Tibial artery (tissue), 4 donors: ENCODE measurements at regions of chr18 and their contacts with region 1.

Region 1: DNA sequence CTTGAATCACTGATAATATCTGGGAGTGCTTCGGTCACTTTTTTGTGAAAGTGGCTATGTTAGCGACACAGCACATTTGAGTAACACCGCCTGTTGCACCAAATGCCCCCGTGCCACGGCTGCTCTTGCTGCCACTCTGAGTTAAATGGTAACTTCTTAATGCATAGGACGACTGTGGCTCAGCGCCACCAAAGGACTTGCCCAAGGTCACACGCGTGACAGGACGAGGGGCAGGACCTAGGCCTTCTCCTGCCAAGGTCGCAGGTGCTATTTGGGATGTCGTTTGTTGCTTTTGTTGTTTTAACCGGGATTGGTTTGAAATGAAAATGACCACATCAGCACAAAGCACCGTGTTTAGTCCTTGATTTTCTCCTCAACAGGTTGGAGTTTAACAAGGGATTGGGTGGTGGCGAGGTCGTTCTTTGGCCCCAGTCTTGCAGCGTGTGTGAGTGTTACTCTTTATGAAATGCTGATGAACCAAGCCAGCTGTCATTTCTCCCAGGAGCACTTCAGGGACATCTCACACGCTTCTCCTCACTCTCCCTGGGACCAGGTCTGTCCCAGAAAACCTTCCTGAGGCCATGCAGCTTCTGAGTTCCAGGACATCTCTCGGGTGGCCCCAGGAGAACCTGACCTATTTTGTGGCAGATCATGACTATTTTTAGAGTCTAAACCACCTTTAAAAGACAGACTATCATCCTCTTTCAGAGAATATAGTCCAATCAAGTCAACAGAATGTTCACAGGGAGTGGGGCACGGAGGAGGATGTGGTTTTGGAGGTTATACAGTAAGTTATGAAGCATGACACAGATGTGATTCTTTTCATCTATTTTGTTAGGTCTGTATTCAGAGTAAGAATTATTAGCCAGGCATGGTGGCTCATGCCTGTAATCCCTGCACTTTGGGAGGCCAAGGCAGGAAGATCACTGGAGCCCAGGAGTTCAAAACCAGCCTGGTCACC is 49.9 kb downstream of the MTCL1 start:
- DNase-seq: no peak
- H3K4me3 ChIP-seq: no peak overlapping the region
- H3K27ac ChIP-seq: no peak overlapping the region
- H3K4me1 ChIP-seq: no peaks in the 10 kb centered on the region
- H3K27me3 ChIP-seq: no peaks in the 10 kb centered on the region
- CTCF ChIP-seq: no peak

Region 2: GRCh38 chr18:7094432-7094831 is 1660.8 kb before region 1 on chr18:
- intact Hi-C with region 1: loop called (anchors 5 kb)
- DNase-seq: no peak
- H3K4me3 ChIP-seq: no peak overlapping the region
- H3K27ac ChIP-seq: no peak overlapping the region
- H3K4me1 ChIP-seq: peaks cover 0 to 10% (median 0%) of the 10 kb centered on the region in 4 donors
- H3K27me3 ChIP-seq: no peaks in the 10 kb centered on the region
- CTCF ChIP-seq: no peak

Region 3: GRCh38 chr18:8242151-8242696 is 513.1 kb before region 1 on chr18:
- intact Hi-C with region 1: no loop called
- DNase-seq: no peak
- H3K4me3 ChIP-seq: no peak overlapping the region
- H3K27ac ChIP-seq: no peak overlapping the region
- H3K4me1 ChIP-seq: no peaks in the 10 kb centered on the region
- H3K27me3 ChIP-seq: no peaks in the 10 kb centered on the region
- CTCF ChIP-seq: no peak

Region 4: DNA sequence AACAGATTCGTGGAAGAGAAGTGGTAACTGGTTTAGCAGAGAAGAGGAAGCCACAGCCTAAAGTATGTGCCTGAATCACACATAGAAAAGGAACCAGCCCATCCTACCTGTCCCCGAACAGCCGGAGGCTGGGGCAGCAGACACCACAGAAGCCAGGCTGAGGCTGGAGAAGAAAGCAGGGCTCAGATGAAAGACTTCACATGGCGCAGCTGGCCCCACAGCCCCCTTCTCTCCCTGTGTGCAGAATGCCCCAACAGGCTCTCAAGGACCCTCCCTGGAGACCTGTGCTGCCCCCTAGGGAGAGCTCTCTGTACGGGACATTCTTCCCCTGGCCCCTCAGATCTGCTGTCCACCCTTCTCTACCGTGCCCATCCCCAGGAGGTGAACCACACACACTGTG is 229.6 kb before region 1 on chr18:
- intact Hi-C with region 1: no loop called
- DNase-seq: peak in 1 of 2 donors; percentile 15
- H3K4me3 ChIP-seq: no peak overlapping the region
- H3K27ac ChIP-seq: no peak overlapping the region
- H3K4me1 ChIP-seq: no peaks in the 10 kb centered on the region
- H3K27me3 ChIP-seq: peaks cover 0 to 7% of the 10 kb centered on the region in 2 donors
- CTCF ChIP-seq: no peak

Region 5: GRCh38 chr18:8696749-8697211 is 58.5 kb before region 1 on chr18:
- intact Hi-C with region 1: no loop called
- DNase-seq: peak; percentile 75 to 85
- H3K4me3 ChIP-seq: no peak overlapping the region
- H3K27ac ChIP-seq: no peak overlapping the region
- H3K4me1 ChIP-seq: no peaks in the 10 kb centered on the region
- H3K27me3 ChIP-seq: no peaks in the 10 kb centered on the region
- CTCF ChIP-seq: peak; percentile 76 to 81